Activated CD4-positive, alpha-beta memory T cell treated with anti-CD3 and anti-CD28 coated beads for 36 hours (primary cell): ENCODE measurements at regions of chr2 and their contacts with region 1.

Region 1: DNA sequence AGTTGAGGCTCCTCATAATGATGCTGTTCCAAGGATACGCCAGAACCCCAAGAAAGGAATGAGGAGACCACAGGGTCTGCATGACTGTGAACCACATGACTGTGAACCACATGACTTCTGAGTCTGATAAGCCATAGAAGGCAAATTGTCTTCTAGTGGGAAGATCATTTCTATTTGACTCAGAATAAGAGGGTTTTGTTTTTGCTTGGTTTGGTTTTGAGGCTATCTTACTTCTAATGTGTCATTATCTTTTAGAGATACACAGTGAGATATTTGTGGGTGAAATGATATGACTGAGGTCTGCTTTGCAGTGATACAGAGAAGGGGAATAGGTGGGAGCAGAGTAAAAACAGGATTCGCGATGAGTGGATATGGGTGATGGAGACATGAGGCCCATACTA is 28.9 kb upstream of the BCL2L11 start:
- DNase-seq: peak; percentile 34
- H3K4me3 Mint-ChIP-seq: no peak overlapping the region
- H3K27ac Mint-ChIP-seq: no peak overlapping the region
- H3K4me1 Mint-ChIP-seq: peaks cover 18% of the 10 kb centered on the region
- H3K27me3 Mint-ChIP-seq: peaks cover 49% of the 10 kb centered on the region

Region 2: GRCh38 chr2:110847651-110848050 is 244.2 kb before region 1 on chr2:
- CTCF ChIA-PET with region 1: no interaction called
- POLR2A ChIA-PET with region 1: no interaction called
- intact Hi-C with region 1: loop called (anchors 1 kb)
- DNase-seq: peak; percentile 36
- H3K4me3 Mint-ChIP-seq: no peak overlapping the region
- H3K27ac Mint-ChIP-seq: peak overlapping the region; percentile 76
- H3K4me1 Mint-ChIP-seq: peaks cover 67% of the 10 kb centered on the region
- H3K27me3 Mint-ChIP-seq: peaks cover 22% of the 10 kb centered on the region

Region 3: DNA sequence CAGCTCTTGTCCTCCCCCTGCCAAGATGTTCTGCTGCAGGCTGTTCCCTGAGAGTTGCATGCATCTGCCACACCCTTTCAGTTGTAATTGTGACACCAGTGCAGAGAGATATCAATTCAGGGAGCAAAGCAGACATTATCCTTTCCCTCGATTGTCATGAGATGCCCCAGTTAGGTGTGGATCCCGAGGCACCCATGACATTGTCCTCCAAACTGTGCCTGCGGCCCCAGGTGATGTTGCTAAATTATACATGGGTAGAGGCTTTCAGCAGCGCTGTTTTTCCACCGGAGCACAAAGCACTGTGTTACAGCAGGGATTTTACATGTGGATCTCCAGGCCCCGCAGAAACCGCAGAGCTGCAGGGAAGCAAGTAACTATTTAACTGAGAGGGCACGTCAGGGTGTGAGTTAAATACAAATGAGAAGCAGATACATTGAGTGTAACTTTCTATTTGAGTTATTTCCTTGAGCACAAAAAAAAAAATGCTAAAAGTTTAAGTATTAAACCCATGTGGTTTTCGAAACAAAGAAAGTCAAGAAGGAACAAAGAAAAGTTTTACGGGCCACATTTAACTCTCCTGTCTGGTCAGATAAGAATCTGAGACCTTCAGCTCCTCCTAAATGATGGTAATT is 61.4 kb before region 1 on chr2:
- CTCF ChIA-PET with region 1: no interaction called
- POLR2A ChIA-PET with region 1: no interaction called
- intact Hi-C with region 1: loop called (anchors 2 kb)
- DNase-seq: peak; percentile 58
- H3K4me3 Mint-ChIP-seq: no peak overlapping the region
- H3K27ac Mint-ChIP-seq: no peak overlapping the region
- H3K4me1 Mint-ChIP-seq: peaks cover 25% of the 10 kb centered on the region
- H3K27me3 Mint-ChIP-seq: peaks cover 62% of the 10 kb centered on the region

Region 4: DNA sequence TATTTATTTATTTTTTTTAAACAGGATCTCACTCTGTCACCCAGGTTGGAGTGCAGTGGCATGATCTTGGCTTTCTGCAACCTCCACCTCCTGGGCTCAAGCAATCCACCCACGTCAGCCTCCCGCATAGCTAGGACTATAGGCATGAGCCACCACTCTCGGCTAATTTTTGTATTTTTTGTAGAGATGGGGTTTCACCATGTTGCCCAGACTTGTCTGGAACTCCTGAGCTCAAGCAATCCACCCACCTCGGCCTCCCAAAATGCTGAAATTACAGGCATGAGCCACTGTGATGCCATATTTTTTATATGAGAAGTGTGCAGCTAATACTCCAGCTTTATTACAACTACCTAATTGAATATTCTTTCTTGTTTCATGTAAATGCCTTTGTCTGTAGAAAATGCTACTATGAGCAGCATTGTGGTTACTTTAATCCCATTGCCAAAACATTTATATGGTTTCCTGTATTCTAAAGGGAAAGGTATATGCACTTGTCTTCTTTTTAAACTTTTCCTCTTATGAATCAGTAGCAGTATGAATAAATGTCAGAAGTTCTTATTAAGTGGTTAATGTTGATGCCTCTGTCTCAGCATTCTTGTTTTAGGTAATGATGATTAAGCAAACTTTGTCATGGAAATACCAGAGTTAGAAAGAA is 19.4 kb after region 1 on chr2:
- CTCF ChIA-PET with region 1: interaction called, 4 read pairs
- POLR2A ChIA-PET with region 1: interaction called, 4 read pairs
- intact Hi-C with region 1: loop called (anchors 1 kb)
- DNase-seq: peak; percentile 57
- H3K4me3 Mint-ChIP-seq: no peak overlapping the region
- H3K27ac Mint-ChIP-seq: no peak overlapping the region
- H3K4me1 Mint-ChIP-seq: peaks cover 28% of the 10 kb centered on the region
- H3K27me3 Mint-ChIP-seq: peaks cover 58% of the 10 kb centered on the region